Dendritic cell treated with granulocyte-macrophage colony-stimulating factor and Interleukin-4, amounts not matched to agents 40 ng/mL and 50 ng/mL, for 4 days (primary cell): ENCODE measurements at regions of chr13 and their contacts with region 1.

Region 1: DNA sequence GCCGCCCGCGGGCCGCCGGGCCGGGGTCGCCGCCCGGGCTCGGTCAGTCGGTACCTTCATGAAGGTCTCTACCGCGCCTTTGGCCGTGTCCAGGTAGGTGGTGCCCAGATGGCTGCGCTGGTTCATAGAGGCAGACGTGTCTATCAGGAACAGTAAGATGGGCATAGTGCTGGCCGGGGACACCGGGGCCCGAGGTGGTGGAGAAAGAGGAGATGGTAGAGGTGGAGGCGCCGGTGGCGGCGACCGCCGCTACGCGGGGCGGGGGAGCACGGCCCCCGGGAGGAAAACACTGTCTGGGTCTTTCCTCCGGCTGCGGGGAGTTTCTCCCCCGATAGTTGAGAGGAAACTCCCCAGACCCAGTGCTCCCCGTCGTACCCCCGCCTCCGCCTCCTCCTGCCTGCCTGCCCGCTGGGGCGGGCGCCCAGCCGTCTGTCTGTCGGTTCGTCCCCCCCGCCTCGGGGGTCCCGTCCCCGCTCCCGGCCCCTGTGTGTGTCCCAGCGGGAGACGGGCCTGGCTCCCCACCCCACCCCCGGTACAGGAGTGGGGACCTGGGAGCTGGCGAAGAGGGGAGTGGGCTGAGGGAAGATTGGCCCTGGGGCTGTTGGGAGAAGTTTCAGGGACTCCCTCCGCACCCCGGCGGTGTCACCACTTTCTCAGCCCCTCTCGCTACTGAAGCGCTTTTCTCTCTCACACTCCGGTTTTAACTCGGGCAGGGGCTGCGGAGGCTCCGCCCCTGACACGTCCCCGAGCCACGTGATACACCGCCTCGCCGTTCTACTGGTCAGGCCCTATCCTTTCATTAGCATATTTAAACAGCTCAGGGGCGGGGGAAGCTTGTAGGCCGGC is at the start of gene INTS6:
- H3K4me3 Mint-ChIP-seq: peak within 1 kb of the TSS; percentile 93
- H3K27ac Mint-ChIP-seq: peak within 1 kb of the TSS; percentile 97
- H3K4me1 Mint-ChIP-seq: peaks cover 38% of the 10 kb centered on the region
- H3K27me3 Mint-ChIP-seq: no peaks in the 10 kb centered on the region

Region 2: GRCh38 chr13:51562011-51562671 is 109.6 kb after region 1 on chr13:
- intact Hi-C with region 1: loop called (anchors 5 kb)
- H3K4me3 Mint-ChIP-seq: peak overlapping the region; percentile 40
- H3K27ac Mint-ChIP-seq: peak overlapping the region; percentile 79
- H3K4me1 Mint-ChIP-seq: peaks cover 78% of the 10 kb centered on the region
- H3K27me3 Mint-ChIP-seq: no peaks in the 10 kb centered on the region

Region 3: GRCh38 chr13:51803422-51804294 is 351.1 kb after region 1 on chr13 and contains the start of gene DHRS12:
- intact Hi-C with region 1: loop called (anchors 5 kb)
- H3K4me3 Mint-ChIP-seq: peak within 1 kb of the TSS; percentile 82
- H3K27ac Mint-ChIP-seq: peak within 1 kb of the TSS; percentile 90
- H3K4me1 Mint-ChIP-seq: peaks cover 48% of the 10 kb centered on the region
- H3K27me3 Mint-ChIP-seq: peaks cover 17% of the 10 kb centered on the region